Activated CD8-positive, alpha-beta T cell treated with anti-CD3 and anti-CD28 coated beads, Interleukin-2, amount 10 ng/mL, durations not matched to agents 7 days and 5 days (primary cell): ENCODE measurements at regions of chr18 and their contacts with region 1.

Region 1: DNA sequence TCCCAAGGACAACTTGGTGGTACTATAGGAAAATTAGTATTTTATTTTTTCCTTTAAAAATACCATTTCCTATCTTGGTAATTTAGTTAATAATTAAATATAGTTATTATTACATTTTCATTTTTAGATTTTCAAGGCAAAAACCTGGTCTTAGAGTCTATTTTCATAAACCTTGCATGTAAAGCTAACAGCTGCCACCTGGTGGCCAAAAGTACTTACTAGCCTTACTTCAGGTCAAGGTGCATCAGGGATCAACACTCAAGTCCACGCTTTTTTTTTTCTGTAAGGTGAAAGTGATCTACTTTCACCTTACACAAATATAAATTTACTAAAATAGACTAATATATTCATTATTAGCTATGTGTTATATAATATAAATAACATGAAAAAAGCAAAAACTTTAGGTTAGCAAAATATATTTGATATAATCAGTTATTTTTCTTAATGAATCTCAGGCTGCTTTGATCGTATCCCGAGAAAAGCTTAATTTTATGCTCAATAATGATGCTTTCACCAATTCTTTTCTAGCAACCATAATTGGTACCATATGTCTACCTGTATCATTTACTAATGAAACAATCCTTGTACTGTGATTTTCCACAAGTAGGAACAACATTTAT is 62.5 kb downstream of the RELCH start:
- DNase-seq: peak; percentile 82
- ATAC-seq: peak; percentile 53
- H3K4me3 Mint-ChIP-seq: no peak overlapping the region
- H3K27ac Mint-ChIP-seq: no peak overlapping the region
- H3K4me1 Mint-ChIP-seq: no peaks in the 10 kb centered on the region
- H3K27me3 Mint-ChIP-seq: no peaks in the 10 kb centered on the region

Region 2: DNA sequence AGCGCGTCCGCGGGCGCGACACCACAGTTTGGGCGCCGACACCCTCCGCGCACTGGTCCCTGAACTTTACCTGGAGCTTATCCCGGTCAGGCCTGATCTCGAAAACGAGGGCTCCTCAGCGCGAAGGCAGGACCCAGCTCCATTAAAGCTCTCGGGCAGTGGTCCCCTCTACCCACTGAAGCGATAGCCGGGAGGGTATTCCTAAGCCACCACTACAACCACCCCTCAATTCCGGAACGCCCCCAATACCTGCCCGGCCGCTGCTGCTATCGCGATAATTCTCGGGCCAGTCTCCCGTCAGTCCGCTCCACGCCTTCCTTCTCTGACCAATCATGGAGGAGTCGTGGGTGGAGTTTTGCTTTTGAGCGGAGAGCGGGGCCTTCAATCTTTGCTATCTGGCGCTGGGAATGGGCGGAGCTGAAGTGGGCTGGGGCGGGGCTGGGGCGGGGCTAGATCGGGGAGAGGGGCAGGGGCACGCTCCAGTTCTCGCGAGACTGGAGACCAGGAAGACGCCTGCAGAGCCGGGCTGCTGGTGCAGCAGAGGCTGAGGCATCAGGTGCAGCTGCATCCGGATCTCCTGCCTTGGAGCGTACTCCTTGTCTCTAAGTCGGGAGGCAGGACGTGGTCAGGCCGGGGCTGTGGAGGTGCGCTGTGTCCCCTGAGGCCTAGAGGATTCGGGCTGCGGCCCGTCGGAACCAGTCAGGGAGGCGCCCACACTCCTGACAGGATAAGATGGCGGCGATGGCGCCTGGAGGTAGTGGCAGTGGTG is 62.6 kb before region 1 on chr18 and contains the starts of genes PIGN and RELCH:
- CTCF ChIA-PET with region 1: interaction called, 38 read pairs
- POLR2A ChIA-PET with region 1: interaction called, 12 read pairs
- DNase-seq: peak; percentile 98
- ATAC-seq: peak; percentile 93
- H3K4me3 Mint-ChIP-seq: peak within 1 kb of the TSS; percentile 90
- H3K27ac Mint-ChIP-seq: peak within 1 kb of the TSS; percentile 92
- H3K4me1 Mint-ChIP-seq: peaks cover 50% of the 10 kb centered on the region
- H3K27me3 Mint-ChIP-seq: no peaks in the 10 kb centered on the region
- total RNA-seq, gene PIGN: 27.3 to 27.9 TPM
- total RNA-seq, gene RELCH: 32.8 to 37.4 TPM

Region 3: GRCh38 chr18:62198259-62198658 is 51.3 kb before region 1 on chr18:
- CTCF ChIA-PET with region 1: interaction called, 14 read pairs
- POLR2A ChIA-PET with region 1: no interaction called
- DNase-seq: no peak
- ATAC-seq: no peak
- H3K4me3 Mint-ChIP-seq: no peak overlapping the region
- H3K27ac Mint-ChIP-seq: no peak overlapping the region
- H3K4me1 Mint-ChIP-seq: peaks cover 10% of the 10 kb centered on the region
- H3K27me3 Mint-ChIP-seq: no peaks in the 10 kb centered on the region

Region 4: DNA sequence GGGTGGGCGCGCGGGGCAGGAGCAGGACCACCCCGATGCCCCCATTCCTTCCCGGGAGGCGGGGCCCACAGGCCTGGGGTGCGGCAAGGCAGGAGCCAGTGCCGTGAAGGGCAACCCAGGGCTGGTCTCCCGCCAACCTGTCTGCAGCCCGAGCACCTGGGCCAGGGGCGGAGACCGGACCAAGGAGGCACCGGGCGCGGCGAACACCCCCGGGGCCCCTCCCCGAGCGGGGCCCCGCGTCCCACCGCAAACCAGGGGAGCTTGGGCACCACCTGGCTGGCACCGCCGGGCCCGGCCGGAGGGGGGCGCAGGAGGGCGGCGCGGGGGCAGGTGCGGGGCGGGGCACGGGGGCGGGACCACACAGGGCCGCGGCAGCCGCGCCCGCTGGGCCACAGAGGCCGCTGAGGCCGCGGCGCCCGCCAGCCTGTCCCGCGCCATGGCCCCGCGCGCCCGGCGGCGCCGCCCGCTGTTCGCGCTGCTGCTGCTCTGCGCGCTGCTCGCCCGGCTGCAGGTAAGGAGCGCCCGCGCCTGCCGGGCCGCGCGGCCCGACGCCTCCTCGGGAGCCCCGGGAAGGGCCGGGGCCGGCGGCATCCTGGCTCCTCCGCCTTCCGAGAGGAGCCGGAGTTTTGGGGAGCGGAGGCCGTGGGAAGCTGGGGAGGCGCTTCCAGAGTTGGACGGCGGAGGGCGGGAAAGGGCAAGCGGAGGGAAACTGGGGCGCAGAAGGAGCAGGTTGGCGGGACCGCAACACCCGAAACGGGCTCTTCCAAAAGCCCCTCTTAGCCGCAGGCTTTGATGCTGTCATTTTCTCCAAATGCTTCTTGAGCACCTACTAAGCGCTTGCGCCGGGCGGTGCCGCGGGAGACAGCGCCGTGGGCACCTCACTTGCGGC is 75.6 kb after region 1 on chr18 and contains the start of gene TNFRSF11A:
- CTCF ChIA-PET with region 1: interaction called, 10 read pairs
- POLR2A ChIA-PET with region 1: no interaction called
- DNase-seq: peak; percentile 68
- ATAC-seq: peak; percentile 83
- H3K4me3 Mint-ChIP-seq: peak within 1 kb of the TSS; percentile 75
- H3K27ac Mint-ChIP-seq: no peak within 1 kb of the TSS
- H3K4me1 Mint-ChIP-seq: peaks cover 45% of the 10 kb centered on the region
- H3K27me3 Mint-ChIP-seq: peaks cover 52% of the 10 kb centered on the region
- total RNA-seq, gene TNFRSF11A: 4.0 to 4.3 TPM

Region 5: GRCh38 chr18:62399781-62400308 is 150.3 kb after region 1 on chr18:
- CTCF ChIA-PET with region 1: no interaction called
- POLR2A ChIA-PET with region 1: no interaction called
- DNase-seq: no peak
- ATAC-seq: no peak
- H3K4me3 Mint-ChIP-seq: no peak overlapping the region
- H3K27ac Mint-ChIP-seq: no peak overlapping the region
- H3K4me1 Mint-ChIP-seq: peaks cover 10% of the 10 kb centered on the region
- H3K27me3 Mint-ChIP-seq: no peaks in the 10 kb centered on the region